PC-9 (cell line): ENCODE measurements at regions of chr10 and their contacts with region 1.

Region 1: GRCh38 chr10:43407576-43408330 is 1.2 kb downstream of the HNRNPF start:
- DNase-seq: peak; percentile 86
- H3K4me3 ChIP-seq: peak overlapping the region; percentile 98
- H3K27ac ChIP-seq: peak overlapping the region; percentile 90
- H3K4me1 ChIP-seq: peaks cover 40% of the 10 kb centered on the region
- H3K27me3 ChIP-seq: no peaks in the 10 kb centered on the region
- CTCF ChIP-seq: 0 out of 2 replicates have a peak, but pooled peaks have one; percentile 30

Region 2: DNA sequence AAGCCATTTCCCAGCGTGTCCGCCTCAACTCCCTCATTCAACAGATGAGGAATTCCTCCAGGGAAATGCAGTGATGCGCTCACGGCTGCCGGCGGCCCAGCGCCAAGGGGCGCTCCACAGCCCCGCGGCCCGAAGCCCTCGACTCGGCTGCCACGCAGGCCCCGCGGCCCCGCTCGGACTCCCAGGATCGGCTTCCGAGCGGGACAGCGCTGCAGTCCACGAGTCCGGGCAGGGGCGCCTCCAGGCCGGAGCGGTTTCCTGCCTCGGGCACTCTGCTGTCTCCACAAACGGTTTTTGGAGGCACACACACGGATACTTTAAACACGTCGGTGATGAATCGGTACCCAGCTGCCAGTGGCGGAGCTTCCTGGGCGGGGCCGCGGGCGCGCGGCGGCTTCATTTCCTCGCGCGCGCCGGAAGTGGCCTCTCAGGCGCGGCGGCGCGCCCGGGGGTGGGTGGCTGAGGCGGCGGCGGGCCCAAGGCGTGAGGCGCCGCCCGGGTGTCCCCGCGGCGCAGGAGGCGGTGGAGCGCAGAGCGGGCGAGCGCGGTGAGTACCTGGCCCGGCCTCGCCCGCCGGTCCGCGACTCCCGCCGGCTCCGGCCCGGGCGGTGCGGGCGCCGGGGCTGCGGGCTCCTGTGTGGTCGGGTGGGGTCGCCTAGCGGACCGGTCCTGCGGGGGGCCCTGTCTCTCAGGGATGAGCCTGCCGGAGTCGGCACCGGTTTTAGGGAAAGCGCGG is 269.6 kb before region 1 on chr10 and contains the start of gene CSGALNACT2:
- CTCF ChIA-PET with region 1: no interaction called
- POLR2A ChIA-PET with region 1: interaction called, 11 read pairs
- intact Hi-C with region 1: no loop called
- DNase-seq: peak; percentile 64 to 85
- H3K4me3 ChIP-seq: peak within 1 kb of the TSS; percentile 99
- H3K27ac ChIP-seq: 0 out of 2 replicates have a peak within 1 kb of the TSS, but pooled peaks have one; percentile 7
- H3K4me1 ChIP-seq: peaks cover 28% of the 10 kb centered on the region
- H3K27me3 ChIP-seq: no peaks in the 10 kb centered on the region
- CTCF ChIP-seq: no peak
- total RNA-seq, gene CSGALNACT2: 7.2 and 8.5 TPM in 2 replicates

Region 3: DNA sequence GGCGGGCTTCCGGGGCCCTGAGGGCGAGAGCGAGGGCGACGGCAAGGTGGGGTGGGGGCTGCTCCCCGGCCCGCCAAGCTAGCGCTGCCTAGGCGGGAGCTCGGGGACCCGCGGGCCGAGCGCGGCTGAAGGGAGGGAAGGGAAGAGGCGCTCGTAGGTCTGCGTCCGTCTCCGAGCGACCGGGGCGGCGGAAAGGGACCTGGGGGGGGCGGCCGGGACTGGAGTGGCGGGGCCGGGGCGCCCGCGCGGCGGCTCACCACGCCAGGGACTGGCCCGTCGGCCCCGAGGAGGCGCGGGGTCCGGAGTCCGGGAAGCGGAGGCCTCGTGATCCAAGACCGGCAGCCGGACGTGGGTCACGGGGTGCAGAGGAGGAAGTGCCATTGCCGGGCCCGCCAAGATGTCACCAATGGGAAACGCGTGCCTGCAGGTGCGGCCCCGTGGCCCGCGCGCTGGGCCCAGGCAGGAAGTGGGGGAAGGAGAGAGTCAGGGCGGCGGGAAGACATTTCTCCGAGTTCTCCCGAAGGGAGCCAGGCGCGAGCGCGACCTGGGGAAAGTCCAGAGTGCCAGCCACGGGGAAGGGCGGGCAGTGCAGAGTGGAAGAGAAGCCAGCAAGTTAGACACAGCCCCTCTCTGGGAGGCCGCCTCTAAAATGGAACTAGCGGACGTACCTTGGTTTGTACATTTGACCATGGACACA is 10.7 kb before region 1 on chr10:
- CTCF ChIA-PET with region 1: no interaction called
- POLR2A ChIA-PET with region 1: interaction called, 4 read pairs
- intact Hi-C with region 1: loop called (anchors 1 kb)
- DNase-seq: peak; percentile 86 to 96
- H3K4me3 ChIP-seq: peak overlapping the region; percentile 63
- H3K27ac ChIP-seq: peak overlapping the region; percentile 80
- H3K4me1 ChIP-seq: peaks cover 63% of the 10 kb centered on the region
- H3K27me3 ChIP-seq: no peaks in the 10 kb centered on the region
- CTCF ChIP-seq: no peak

Region 4: DNA sequence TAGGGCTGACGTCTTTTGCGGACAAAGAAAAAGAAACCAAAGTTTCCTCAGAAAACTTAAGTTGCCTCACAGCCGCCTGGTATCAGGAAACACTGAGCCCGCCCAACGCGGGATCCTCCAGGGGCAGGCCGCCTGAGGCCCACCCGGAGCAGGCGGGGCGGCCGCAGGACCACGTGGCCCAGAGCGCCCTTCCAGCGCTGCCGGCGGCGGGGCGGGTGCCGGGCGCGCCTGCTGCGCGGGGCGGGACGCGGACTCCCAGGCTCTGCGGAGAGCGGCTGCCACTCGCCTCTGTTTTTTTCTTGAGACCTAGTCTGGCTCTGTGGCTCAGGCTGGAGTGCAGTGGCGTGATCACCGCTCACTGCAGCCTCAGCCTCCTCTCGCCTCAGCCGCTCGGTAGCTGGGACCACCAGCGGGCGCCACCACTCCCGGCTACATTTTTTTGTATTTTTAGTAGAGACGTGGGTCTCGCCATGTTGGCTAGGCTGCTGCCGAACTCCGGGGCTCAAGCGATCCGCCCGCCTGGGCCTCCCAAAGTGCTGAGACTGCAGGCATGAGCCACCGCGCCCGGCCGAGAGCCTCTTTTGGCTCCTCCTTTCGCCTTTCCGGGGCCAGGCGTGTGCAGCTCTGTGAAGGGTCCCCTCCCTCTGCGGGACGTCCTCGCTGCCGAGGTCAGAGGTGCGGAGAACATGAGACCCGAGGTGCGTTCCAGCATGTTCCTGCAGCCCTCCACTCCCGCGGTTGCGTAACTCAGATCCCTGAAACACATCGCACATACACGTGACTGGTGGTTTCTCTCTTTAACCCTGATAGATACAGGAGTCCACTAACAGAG is 12.8 kb after region 1 on chr10:
- CTCF ChIA-PET with region 1: no interaction called
- POLR2A ChIA-PET with region 1: no interaction called
- intact Hi-C with region 1: loop called (anchors 1 kb)
- DNase-seq: peak; percentile 65 to 91
- H3K4me3 ChIP-seq: peak overlapping the region; percentile 80
- H3K27ac ChIP-seq: peak overlapping the region; percentile 77
- H3K4me1 ChIP-seq: peaks cover 14% of the 10 kb centered on the region
- H3K27me3 ChIP-seq: no peaks in the 10 kb centered on the region
- CTCF ChIP-seq: no peak

Region 5: GRCh38 chr10:43436400-43437140 is 28.8 kb after region 1 on chr10 and contains the start of gene ZNF487:
- CTCF ChIA-PET with region 1: interaction called, 3 read pairs
- POLR2A ChIA-PET with region 1: interaction called, 15 read pairs
- intact Hi-C with region 1: loop called (anchors 1 kb)
- DNase-seq: peak; percentile 83 to 97
- H3K4me3 ChIP-seq: peak within 1 kb of the TSS; percentile 98
- H3K27ac ChIP-seq: peak within 1 kb of the TSS; percentile 88
- H3K4me1 ChIP-seq: 0 out of 2 replicates have a peak, but pooled peaks cover 4% of the 10 kb centered on the region
- H3K27me3 ChIP-seq: no peaks in the 10 kb centered on the region
- CTCF ChIP-seq: no peak
- total RNA-seq, gene ZNF487: 11.8 and 14.5 TPM in 2 replicates

Region 6: GRCh38 chr10:43453266-43453831 is 45.6 kb after region 1 on chr10:
- CTCF ChIA-PET with region 1: no interaction called
- POLR2A ChIA-PET with region 1: interaction called, 17 read pairs
- intact Hi-C with region 1: no loop called
- DNase-seq: no peak
- H3K4me3 ChIP-seq: no peak overlapping the region
- H3K27ac ChIP-seq: no peak overlapping the region
- H3K4me1 ChIP-seq: peaks cover 19% of the 10 kb centered on the region; the same call in 1 of the 2 replicates
- H3K27me3 ChIP-seq: no peaks in the 10 kb centered on the region
- CTCF ChIP-seq: no peak

Region 7: GRCh38 chr10:43901302-43901701 is 493.5 kb after region 1 on chr10:
- CTCF ChIA-PET with region 1: no interaction called
- POLR2A ChIA-PET with region 1: no interaction called
- intact Hi-C with region 1: no loop called
- DNase-seq: no peak
- H3K4me3 ChIP-seq: no peak overlapping the region
- H3K27ac ChIP-seq: no peak overlapping the region
- H3K4me1 ChIP-seq: no peaks in the 10 kb centered on the region
- H3K27me3 ChIP-seq: peaks cover 59% of the 10 kb centered on the region
- CTCF ChIP-seq: peak; percentile 27; the same call in 1 of the 2 replicates